Gastrocnemius medialis (tissue), 4 donors: ENCODE measurements at regions of chr5 and their contacts with region 1.

Region 1: DNA sequence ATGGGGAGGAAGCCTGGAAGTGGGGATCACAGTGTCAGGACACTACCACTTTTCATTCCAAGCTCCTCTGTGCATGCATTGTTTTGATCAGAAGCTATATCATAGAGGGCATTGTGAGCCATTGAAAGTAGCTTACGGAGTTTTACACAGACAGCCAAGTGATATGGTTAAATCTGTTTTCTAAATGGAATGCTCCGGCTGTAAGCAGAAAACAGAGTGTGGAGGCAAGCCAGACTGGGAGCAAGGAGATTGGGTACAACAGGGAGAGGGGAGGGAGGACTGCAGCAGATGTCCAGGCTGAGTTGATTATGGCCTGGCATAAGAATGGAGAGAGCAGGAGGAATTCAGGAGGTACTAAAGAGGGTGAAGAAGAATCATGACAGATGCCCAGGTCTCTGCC is 15.5 kb upstream of the SOWAHA start:
- DNase-seq: no peak
- ATAC-seq: no peak
- H3K4me3 ChIP-seq: no peak overlapping the region
- H3K27ac ChIP-seq: no peak overlapping the region
- H3K4me1 ChIP-seq: no peaks in the 10 kb centered on the region
- H3K27me3 ChIP-seq: peaks cover 0 to 3% (median 0%) of the 10 kb centered on the region in 3 donors
- CTCF ChIP-seq: no peak
- POLR2A ChIP-seq: no peak

Region 2: DNA sequence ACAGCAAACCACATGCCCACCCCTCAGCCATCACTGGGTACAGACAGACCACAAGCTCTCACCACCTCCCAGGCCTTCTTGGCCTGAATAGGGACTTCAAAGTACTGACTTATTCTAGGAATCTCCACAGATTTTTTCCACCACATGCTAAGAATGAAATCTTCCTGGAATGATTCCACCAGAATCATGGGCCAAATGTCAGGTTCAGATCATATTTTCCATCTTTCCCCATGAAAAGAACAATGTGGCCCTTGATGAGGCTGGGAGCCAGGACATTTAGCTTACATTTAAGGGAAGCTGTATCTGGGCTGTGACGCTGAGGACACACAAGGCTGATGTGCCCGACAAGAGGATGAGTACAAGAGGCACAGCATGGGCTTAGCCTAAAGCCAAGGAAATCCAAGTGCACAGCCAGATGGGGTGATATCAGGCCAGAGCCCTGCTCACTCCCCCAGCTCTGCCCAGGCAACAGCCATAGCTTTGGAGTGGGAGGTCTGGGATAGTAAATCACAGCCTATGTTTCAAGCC is 814.3 kb before region 1 on chr5:
- in situ Hi-C with region 1: no loop called
- intact Hi-C with region 1: loop called (anchors 10 kb)
- DNase-seq: no peak
- ATAC-seq: no peak
- H3K4me3 ChIP-seq: no peak overlapping the region
- H3K27ac ChIP-seq: no peak overlapping the region
- H3K4me1 ChIP-seq: peaks cover 0 to 8% of the 10 kb centered on the region in 2 donors
- H3K27me3 ChIP-seq: no peaks in the 10 kb centered on the region
- CTCF ChIP-seq: no peak
- POLR2A ChIP-seq: no peak